ENCODE measurements at regions of chr4 and their contacts with region 1.

Region 1: GRCh38 chr4:77819843-77820648 is 878 bp upstream of the CNOT6L start:
- DNase-seq: peak; percentile 92 to 96
- ATAC-seq: peak; percentile 93 to 96 (median 95)
- H3K4me3 ChIP-seq: peak overlapping the region; percentile 86
- H3K27ac ChIP-seq: peak overlapping the region; percentile 96
- H3K4me1 ChIP-seq: peaks cover 51% of the 10 kb centered on the region
- H3K27me3 ChIP-seq: no peaks in the 10 kb centered on the region
- CTCF ChIP-seq: no peak

Region 2: DNA sequence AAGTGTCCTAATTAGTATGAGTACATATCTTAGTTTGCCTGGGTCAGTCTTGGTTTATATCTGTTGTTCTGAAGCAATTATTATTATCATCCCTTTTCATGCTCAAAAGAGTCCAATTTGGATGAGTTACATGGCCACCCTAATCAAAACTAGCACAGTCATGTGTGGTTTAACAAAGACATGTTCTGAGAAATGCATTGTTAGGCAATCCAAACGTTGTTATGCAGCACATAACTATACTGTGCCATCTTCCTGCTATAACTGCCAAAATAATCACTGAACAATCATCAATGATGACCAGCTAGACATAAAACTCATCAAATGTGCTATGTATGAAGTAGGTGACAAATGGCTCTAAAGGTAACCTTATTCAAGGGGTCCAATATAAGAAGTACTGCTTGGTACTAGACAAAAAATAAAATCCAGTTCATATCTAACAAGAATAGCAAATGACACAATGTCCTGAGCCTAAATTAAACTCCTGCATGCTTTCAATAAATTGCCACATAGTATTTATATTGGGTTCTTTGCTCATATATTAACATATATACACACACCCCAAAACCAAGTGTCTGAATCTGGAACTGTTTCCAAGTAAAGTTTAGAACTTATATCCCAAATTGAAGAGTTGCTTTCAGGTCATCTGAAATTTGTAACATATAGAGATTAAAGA is 42.8 kb before region 1 on chr4:
- intact Hi-C with region 1: loop called in 1 of 2 experiments (anchors 5 kb)
- DNase-seq: no peak
- ATAC-seq: peak; percentile 66 to 87 (median 84)
- H3K4me3 ChIP-seq: peak overlapping the region; percentile 31
- H3K27ac ChIP-seq: peak overlapping the region; percentile 65
- H3K4me1 ChIP-seq: peaks cover 23% of the 10 kb centered on the region
- H3K27me3 ChIP-seq: no peaks in the 10 kb centered on the region
- CTCF ChIP-seq: no peak

Region 3: GRCh38 chr4:77854431-77855111 is 34.5 kb after region 1 on chr4:
- intact Hi-C with region 1: loop called in 1 of 2 experiments (anchors 5 kb)
- DNase-seq: no peak
- ATAC-seq: no peak
- H3K4me3 ChIP-seq: no peak overlapping the region
- H3K27ac ChIP-seq: peak overlapping the region; percentile 32
- H3K4me1 ChIP-seq: no peaks in the 10 kb centered on the region
- H3K27me3 ChIP-seq: no peaks in the 10 kb centered on the region
- CTCF ChIP-seq: no peak

Region 4: DNA sequence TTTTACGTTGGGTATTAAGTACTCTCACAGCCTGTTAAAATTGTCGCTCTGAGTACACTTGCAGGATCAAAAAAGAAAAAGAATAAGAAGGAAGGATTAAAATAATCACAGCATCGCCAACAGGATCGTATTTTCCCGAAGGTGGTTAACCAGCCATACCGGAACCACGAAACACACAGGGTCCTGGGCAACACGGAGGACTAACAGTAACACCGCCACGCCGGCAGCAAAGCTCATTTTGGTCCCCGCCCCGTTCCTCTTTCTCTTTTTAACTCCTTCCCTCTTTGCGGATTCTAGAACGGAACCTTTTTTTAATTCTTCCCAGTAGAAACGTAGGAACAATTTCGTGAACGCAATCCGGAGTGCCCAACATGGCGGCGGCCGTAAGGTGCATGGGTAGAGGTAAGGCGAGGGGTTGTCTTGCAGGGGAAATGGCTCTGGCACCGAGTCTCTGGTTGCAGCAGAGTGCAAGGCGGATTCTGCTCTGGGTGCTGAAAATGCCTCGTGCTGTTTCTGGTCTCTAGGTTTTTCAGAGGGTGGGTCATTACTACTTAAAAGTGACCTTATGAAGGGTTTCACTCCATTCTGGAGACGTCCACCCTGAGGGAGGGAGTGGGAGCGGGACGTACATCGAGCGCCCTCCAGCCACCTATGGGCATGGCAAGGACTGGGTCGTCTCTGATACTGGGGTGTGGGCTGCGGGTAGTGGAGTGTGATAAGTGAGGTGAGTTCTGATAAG is 42.6 kb after region 1 on chr4 and contains the start of gene MRPL1:
- intact Hi-C with region 1: loop called (anchors 1 to 5 kb)
- DNase-seq: peak; percentile 86 to 94
- ATAC-seq: peak; percentile 95 to 97 (median 96)
- H3K4me3 ChIP-seq: peak within 1 kb of the TSS; percentile 95
- H3K27ac ChIP-seq: peak within 1 kb of the TSS; percentile 99
- H3K4me1 ChIP-seq: peaks cover 10% of the 10 kb centered on the region
- H3K27me3 ChIP-seq: no peaks in the 10 kb centered on the region
- CTCF ChIP-seq: no peak
- total RNA-seq, gene MRPL1: 28.1 to 49.9 (median 37.8) TPM

Region 5: DNA sequence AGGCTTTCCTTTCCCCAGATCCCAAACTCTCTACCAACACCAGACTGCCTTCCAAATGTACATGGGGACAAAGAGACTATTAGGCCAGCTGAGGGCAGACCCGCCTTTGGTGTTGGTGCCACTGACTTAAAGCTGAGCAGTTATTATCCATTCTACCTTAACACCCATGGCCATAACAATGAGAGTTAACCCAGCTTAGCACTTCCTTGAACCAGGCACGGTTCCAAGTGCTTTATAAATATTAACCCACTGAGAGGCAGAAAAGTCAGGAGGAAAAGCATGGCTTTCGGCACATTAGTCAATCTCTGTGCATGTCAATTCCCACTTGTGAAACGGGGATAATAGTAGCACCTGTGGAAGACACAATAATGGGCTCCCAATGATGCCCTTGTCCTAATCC is 488.5 kb after region 1 on chr4:
- intact Hi-C with region 1: no loop called
- DNase-seq: no peak
- ATAC-seq: no peak
- H3K4me3 ChIP-seq: no peak overlapping the region
- H3K27ac ChIP-seq: no peak overlapping the region
- H3K4me1 ChIP-seq: no peaks in the 10 kb centered on the region
- H3K27me3 ChIP-seq: no peaks in the 10 kb centered on the region
- CTCF ChIP-seq: no peak

Region 6: DNA sequence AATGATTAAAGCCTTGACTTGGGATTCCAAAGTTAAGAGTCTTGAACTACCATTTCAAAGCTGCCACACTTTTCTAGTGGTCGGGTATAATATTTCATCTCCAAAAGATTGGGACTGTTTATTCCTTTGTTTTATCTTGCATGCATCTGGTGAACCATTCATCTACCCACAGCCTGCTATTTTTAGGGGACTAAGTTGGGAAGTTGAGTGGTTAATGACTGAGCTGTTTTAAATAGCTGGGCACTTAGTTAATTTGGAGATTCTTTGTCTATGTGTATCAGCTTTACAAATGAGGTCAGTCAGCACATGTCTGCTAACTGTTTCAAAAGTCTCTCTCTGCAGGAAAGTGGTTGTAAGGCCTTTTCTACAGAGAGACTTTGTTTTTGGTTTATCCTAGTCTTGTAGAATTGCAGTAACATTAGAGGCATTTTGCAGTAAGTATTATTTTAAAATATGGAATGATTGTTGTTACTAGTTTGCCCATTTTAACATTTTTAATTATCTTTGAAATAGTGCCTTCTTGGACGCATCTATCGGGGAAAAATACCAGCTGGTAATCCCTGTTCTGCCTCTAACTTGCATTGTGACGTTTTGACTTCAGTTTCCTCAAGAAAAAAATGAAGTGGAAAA is 964.3 kb after region 1 on chr4:
- intact Hi-C with region 1: no loop called
- DNase-seq: no peak
- ATAC-seq: peak; percentile 80 to 89 (median 83)
- H3K4me3 ChIP-seq: peak overlapping the region; percentile 3
- H3K27ac ChIP-seq: peak overlapping the region; percentile 58
- H3K4me1 ChIP-seq: peaks cover 61% of the 10 kb centered on the region
- H3K27me3 ChIP-seq: no peaks in the 10 kb centered on the region
- CTCF ChIP-seq: no peak

Measured in psoas muscle (tissue), 8 donors.